SK-N-SH (cell line): ENCODE measurements at regions of chr11 and their contacts with region 1.

Region 1: DNA sequence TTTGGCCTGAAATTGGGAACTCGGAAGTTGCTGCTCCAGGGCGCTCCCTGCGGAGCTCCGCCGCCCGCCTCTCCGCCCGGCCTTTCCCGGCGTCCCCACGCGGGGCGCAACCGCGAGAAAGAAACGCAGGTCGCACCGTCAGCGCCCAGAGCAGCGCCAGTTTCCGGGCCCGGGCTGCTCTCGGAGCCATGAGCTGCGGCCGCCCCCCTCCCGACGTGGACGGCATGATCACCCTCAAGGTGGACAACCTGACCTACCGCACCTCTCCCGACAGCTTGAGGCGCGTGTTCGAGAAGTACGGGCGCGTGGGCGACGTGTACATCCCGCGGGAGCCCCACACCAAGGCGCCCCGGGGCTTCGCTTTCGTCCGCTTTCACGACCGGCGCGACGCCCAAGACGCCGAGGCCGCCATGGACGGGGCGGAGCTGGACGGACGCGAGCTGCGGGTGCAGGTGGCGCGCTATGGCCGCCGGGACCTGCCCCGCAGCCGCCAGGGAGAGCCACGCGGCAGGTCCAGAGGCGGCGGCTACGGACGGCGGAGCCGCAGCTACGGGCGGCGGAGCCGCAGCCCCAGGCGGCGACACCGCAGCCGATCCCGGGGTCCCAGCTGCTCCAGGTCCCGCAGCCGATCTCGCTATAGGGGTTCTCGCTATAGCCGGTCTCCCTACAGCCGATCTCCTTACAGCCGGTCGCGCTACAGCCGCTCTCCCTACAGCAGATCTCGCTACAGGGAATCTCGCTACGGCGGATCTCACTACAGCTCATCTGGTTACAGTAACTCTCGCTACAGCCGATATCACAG is 521 bp downstream of the SRSF8 start:
- DNase-seq: peak; percentile 78
- H3K4me3 ChIP-seq: peak overlapping the region; percentile 90 to 98
- H3K27ac ChIP-seq: peak overlapping the region; percentile 79 to 96
- H3K4me1 ChIP-seq: peaks cover 7 to 8% of the 10 kb centered on the region in 2 experiments; a peak in 3 of 4 replicates
- H3K27me3 ChIP-seq: no peaks in the 10 kb centered on the region
- CTCF ChIP-seq: peak; percentile 50
- EP300 ChIP-seq: no peak
- RAD21 ChIP-seq: no peak

Region 2: GRCh38 chr11:94973099-94973968 is 93.9 kb before region 1 on chr11 and contains the starts of genes CWC15 and KDM4D:
- CTCF ChIA-PET with region 1: interaction called, 3 read pairs
- POLR2A ChIA-PET with region 1: interaction called, 21 read pairs
- DNase-seq: peak; percentile 93
- H3K4me3 ChIP-seq: peak within 1 kb of the TSS; percentile 78 to 97
- H3K27ac ChIP-seq: peak within 1 kb of the TSS; percentile 68 to 86
- H3K4me1 ChIP-seq: peaks cover 6 to 7% of the 10 kb centered on the region in 2 experiments; a peak in 2 of 4 replicates
- H3K27me3 ChIP-seq: no peaks in the 10 kb centered on the region
- CTCF ChIP-seq: no peak
- EP300 ChIP-seq: peak in 1 of 2 experiments; percentile 22; a peak in 1 of 4 replicates
- RAD21 ChIP-seq: no peak
- polyA plus RNA-seq, gene CWC15: 27.0 and 33.5 TPM in 2 replicates
- polyA plus RNA-seq, gene KDM4D: 1.1 and 1.2 TPM in 2 replicates

Region 3: GRCh38 chr11:95078526-95078925 is 11.3 kb after region 1 on chr11:
- CTCF ChIA-PET with region 1: interaction called, 21 read pairs
- POLR2A ChIA-PET with region 1: no interaction called
- DNase-seq: no peak
- H3K4me3 ChIP-seq: no peak overlapping the region
- H3K27ac ChIP-seq: no peak overlapping the region
- H3K4me1 ChIP-seq: peaks cover 3 to 7% of the 10 kb centered on the region in 2 experiments; a peak in 2 of 4 replicates
- H3K27me3 ChIP-seq: no peaks in the 10 kb centered on the region
- CTCF ChIP-seq: no peak
- EP300 ChIP-seq: no peak
- RAD21 ChIP-seq: no peak

Region 4: DNA sequence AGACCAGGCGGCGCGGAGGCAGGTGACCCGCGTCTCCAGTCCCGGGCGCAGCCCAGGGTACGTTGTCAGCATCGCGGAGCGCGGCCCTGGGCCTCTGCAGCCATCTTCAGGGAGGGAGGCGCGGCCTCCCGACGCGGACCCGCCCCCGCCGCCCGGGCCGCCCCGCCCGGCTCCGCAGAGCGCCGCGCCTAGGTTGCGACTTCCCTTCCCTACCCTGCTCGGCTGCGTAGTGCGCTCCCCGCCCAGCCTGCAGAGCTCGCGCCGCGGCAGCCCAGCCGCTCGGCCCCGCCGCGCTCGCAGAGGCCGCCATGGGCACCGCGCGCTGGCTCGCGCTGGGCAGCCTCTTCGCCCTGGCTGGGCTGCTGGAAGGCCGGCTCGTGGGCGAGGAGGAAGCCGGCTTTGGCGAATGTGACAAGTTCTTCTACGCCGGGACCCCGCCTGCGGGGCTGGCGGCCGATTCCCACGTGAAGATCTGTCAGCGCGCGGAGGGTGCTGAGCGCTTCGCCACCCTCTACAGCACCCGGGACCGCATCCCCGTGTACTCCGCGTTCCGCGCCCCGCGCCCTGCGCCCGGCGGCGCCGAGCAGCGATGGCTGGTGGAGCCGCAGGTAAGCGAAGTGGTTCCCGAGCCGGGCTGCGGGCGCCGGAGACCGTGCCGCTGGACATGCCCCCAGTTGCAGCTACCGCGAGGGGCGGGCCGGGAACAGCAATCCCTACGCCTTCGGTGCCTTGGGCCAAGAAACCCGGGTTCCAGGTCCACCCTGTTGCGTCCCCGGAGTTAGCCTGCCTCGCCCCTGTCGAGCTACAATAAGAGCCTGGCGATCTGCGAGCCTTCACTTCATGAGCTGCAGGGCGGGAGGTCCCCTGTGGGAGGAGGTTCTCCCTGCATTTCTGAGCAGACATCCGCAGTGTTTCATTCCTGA is 22.6 kb after region 1 on chr11 and contains the start of gene ENDOD1:
- CTCF ChIA-PET with region 1: interaction called, 52 read pairs
- POLR2A ChIA-PET with region 1: interaction called, 15 read pairs
- DNase-seq: peak; percentile 95
- H3K4me3 ChIP-seq: peak within 1 kb of the TSS; percentile 86 to 90
- H3K27ac ChIP-seq: peak within 1 kb of the TSS; percentile 57 to 72; a peak in 3 of 4 replicates
- H3K4me1 ChIP-seq: peaks cover 13 to 22% of the 10 kb centered on the region in 2 experiments; a peak in 2 of 4 replicates
- H3K27me3 ChIP-seq: no peaks in the 10 kb centered on the region
- CTCF ChIP-seq: no peak; the same call in 1 of the 2 replicates
- EP300 ChIP-seq: no peak
- RAD21 ChIP-seq: no peak
- polyA plus RNA-seq, gene ENDOD1: 15.0 and 18.4 TPM in 2 replicates

Region 5: GRCh38 chr11:95111923-95112540 is 44.8 kb after region 1 on chr11:
- CTCF ChIA-PET with region 1: no interaction called
- POLR2A ChIA-PET with region 1: no interaction called
- DNase-seq: no peak
- H3K4me3 ChIP-seq: no peak overlapping the region
- H3K27ac ChIP-seq: no peak overlapping the region
- H3K4me1 ChIP-seq: peaks cover 0 to 21% of the 10 kb centered on the region in 2 experiments; a peak in 1 of 4 replicates
- H3K27me3 ChIP-seq: no peaks in the 10 kb centered on the region
- CTCF ChIP-seq: no peak
- EP300 ChIP-seq: no peak
- RAD21 ChIP-seq: no peak

Region 6: GRCh38 chr11:95231127-95231880 is 164.1 kb after region 1 on chr11 and contains the start of gene SESN3:
- CTCF ChIA-PET with region 1: interaction called, 6 read pairs
- POLR2A ChIA-PET with region 1: interaction called, 13 read pairs
- DNase-seq: peak; percentile 93
- H3K4me3 ChIP-seq: peak within 1 kb of the TSS; percentile 79 to 91
- H3K27ac ChIP-seq: peak within 1 kb of the TSS; percentile 31 to 99; a peak in 3 of 4 replicates
- H3K4me1 ChIP-seq: peaks cover 11 to 18% of the 10 kb centered on the region in 2 experiments; a peak in 3 of 4 replicates
- H3K27me3 ChIP-seq: no peaks in the 10 kb centered on the region
- CTCF ChIP-seq: no peak
- EP300 ChIP-seq: peak; percentile 18 to 80; a peak in 3 of 4 replicates
- RAD21 ChIP-seq: peak; percentile 55
- polyA plus RNA-seq, gene SESN3: 1.7 and 2.2 TPM in 2 replicates

Region 7: GRCh38 chr11:95764267-95764898 is 697.1 kb after region 1 on chr11:
- CTCF ChIA-PET with region 1: interaction called, 17 read pairs
- POLR2A ChIA-PET with region 1: no interaction called
- DNase-seq: peak; percentile 42
- H3K4me3 ChIP-seq: no peak overlapping the region; a peak in 1 of 4 replicates
- H3K27ac ChIP-seq: no peak overlapping the region
- H3K4me1 ChIP-seq: no peaks in the 10 kb centered on the region
- H3K27me3 ChIP-seq: no peaks in the 10 kb centered on the region
- CTCF ChIP-seq: peak; percentile 79
- EP300 ChIP-seq: no peak
- RAD21 ChIP-seq: peak; percentile 89

Region 8: DNA sequence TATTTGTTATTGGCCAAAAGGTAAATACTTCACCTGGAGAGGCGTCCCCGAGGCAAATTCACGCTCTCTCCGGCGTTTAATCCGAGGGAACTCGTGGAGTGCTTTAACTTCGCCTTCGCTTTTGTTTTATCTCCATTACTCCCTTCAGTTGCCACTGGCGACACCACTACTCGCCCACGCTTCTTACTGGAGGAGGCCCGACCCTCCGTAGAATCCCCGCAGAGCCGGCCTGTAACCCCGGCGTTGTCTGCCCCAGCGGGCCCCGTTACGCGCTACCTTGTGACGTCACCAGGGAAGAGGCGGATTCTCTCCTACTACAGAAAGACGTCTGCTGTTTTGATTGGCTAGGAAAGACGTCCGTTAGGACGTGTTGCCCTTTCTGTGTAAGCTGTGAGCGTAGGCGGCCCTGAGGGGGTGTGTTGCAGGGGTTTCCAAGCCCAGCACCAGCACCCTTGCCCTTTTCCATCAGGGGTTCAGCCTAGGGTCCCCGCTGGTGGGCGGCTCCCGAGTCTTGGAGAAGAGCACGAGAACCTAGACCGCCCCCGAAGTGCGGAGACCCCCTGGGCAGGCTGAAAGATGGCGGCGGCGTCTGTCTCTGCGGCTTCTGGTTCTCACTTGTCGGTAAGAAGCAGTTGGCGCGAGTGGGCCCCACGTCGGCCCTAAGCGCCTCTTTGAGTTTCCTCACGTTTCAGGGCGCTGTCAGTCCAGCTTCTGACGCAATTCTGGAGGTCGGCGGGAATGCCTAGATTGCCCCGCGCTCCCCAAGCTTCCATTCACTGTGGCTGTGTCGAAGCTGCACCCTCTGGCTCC is 723.1 kb after region 1 on chr11 and contains the start of gene CEP57:
- CTCF ChIA-PET with region 1: interaction called, 10 read pairs
- POLR2A ChIA-PET with region 1: interaction called, 8 read pairs
- DNase-seq: peak; percentile 83
- H3K4me3 ChIP-seq: peak within 1 kb of the TSS; percentile 84 to 96
- H3K27ac ChIP-seq: peak within 1 kb of the TSS; percentile 94 to 97
- H3K4me1 ChIP-seq: peaks cover 8 to 33% of the 10 kb centered on the region in 2 experiments
- H3K27me3 ChIP-seq: no peaks in the 10 kb centered on the region
- CTCF ChIP-seq: no peak
- EP300 ChIP-seq: no peak
- RAD21 ChIP-seq: no peak
- polyA plus RNA-seq, gene CEP57: 12.2 and 16.0 TPM in 2 replicates